GM12878 (cell line): ENCODE measurements at regions of chr9 and their contacts with region 1.

Region 1: DNA sequence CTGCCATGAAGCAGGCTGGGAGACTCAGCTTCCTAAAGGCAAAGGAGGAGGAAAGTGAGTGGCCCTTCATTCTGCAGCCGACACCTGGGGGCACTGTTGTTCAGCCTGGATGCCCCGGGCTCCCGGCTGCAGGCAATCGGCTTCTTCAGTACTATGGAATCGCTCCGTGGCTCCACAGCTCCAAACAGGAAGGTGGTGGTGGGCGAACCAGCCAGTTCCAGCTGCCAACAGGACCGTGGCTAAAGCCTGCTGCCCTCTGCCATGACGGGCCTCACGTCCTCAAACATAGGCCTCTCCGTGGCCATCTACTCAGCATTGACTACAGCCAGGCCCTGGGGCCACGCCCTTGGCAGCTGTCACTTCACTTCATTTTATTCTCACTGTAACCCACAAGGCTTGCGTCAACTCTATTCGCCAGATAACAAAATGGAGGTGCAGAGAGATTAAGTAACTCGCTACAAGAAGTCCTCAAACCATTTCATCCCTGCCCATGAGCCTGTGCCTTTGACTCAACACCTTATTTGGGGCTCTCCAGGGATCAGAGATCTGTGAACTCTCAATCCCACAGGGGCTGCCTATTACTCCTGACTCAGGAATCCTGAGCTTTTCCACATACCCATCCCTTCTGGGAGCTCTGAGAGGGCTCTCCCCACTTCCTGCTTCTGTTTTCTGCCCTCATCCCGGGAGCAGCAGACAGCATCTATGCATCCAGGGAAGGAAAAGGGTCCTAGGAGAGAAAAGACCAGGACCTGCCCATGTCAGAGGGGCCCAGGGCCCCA is 38.0 kb downstream of the PAX5 start:
- DNase-seq: no peak
- ATAC-seq: peak; percentile 55
- H3K4me3 ChIP-seq: peak overlapping the region; percentile 47
- H3K27ac ChIP-seq: peak overlapping the region; percentile 93
- H3K4me1 ChIP-seq: peaks cover 88% of the 10 kb centered on the region
- H3K27me3 ChIP-seq: no peaks in the 10 kb centered on the region
- CTCF ChIP-seq: peak; percentile 71 to 86 (median 86)
- EP300 ChIP-seq: no peak
- POLR2A ChIP-seq: peak; percentile 29; the same call in 1 of the 2 replicates
- RAD21 ChIP-seq: peak; percentile 85

Region 2: GRCh38 chr9:36749461-36749860 is 246.7 kb before region 1 on chr9:
- CTCF ChIA-PET with region 1: no interaction called
- POLR2A ChIA-PET with region 1: no interaction called
- RAD21 ChIA-PET with region 1: no interaction called
- SMC1A ChIA-PET with region 1: no interaction called
- in situ Hi-C with region 1: no loop called
- intact Hi-C with region 1: no loop called
- DNase-seq: no peak
- ATAC-seq: no peak
- H3K4me3 ChIP-seq: no peak overlapping the region
- H3K27ac ChIP-seq: no peak overlapping the region
- H3K4me1 ChIP-seq: no peaks in the 10 kb centered on the region
- H3K27me3 ChIP-seq: peaks cover 0 to 4% of the 10 kb centered on the region in 2 experiments; a peak in 3 of 4 replicates
- CTCF ChIP-seq: no peak
- EP300 ChIP-seq: no peak
- POLR2A ChIP-seq: no peak
- RAD21 ChIP-seq: no peak

Region 3: DNA sequence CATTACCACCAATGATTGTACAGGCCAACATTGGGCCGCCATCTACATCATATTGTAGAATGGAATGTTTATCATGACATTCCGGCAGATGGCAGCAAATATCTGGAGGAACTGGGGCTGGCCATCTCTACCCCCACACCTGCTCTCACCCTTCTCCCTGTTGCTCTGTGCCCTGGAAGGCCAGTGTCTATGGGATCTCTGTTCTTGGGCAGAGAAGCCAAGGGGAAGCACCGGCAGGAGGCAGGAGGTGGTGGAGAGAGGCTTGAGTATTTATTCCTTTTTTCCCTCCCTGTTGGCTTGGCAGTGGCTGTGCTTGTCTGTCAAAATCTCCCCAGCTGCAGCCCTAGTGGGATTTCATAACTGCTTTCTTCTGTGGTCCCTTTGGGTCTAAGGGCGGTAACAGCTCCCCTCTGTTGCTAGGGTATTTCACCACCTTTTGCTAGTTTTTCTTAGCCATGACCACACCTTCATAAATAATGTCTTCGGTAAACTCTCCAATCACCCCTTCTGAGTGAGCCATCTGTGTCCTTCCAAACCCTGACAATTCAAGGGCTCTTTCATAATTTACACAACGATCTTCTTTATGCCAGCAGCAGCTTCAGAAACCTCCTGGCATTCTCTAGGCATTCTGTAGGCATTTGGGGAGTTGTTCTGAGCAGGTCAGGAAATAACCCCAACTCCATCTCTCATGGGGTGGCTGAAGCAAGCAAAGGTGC is 197.6 kb before region 1 on chr9:
- CTCF ChIA-PET with region 1: interaction called, 6 read pairs
- POLR2A ChIA-PET with region 1: no interaction called
- RAD21 ChIA-PET with region 1: no interaction called
- SMC1A ChIA-PET with region 1: interaction called, 3 read pairs
- in situ Hi-C with region 1: no loop called
- intact Hi-C with region 1: loop called (anchors 1 kb)
- DNase-seq: no peak
- ATAC-seq: peak; percentile 98
- H3K4me3 ChIP-seq: no peak overlapping the region
- H3K27ac ChIP-seq: no peak overlapping the region
- H3K4me1 ChIP-seq: no peaks in the 10 kb centered on the region
- H3K27me3 ChIP-seq: no peaks in the 10 kb centered on the region; a peak in 1 of 4 replicates
- CTCF ChIP-seq: peak in 2 of 3 experiments; percentile 25 to 66; a peak in 3 of 6 replicates
- EP300 ChIP-seq: no peak
- POLR2A ChIP-seq: no peak
- RAD21 ChIP-seq: peak; percentile 71

Region 4: GRCh38 chr9:37010180-37010579 is 14.1 kb after region 1 on chr9:
- CTCF ChIA-PET with region 1: interaction called, 32 read pairs
- POLR2A ChIA-PET with region 1: interaction called, 354 read pairs
- RAD21 ChIA-PET with region 1: interaction called, 45 read pairs
- SMC1A ChIA-PET with region 1: interaction called, 11 read pairs
- in situ Hi-C with region 1: no loop called
- intact Hi-C with region 1: no loop called
- DNase-seq: no peak
- ATAC-seq: peak; percentile 38
- H3K4me3 ChIP-seq: peak overlapping the region; percentile 61
- H3K27ac ChIP-seq: peak overlapping the region; percentile 83
- H3K4me1 ChIP-seq: peaks cover 76% of the 10 kb centered on the region
- H3K27me3 ChIP-seq: no peaks in the 10 kb centered on the region
- CTCF ChIP-seq: no peak
- EP300 ChIP-seq: no peak
- POLR2A ChIP-seq: 0 out of 2 replicates have a peak, but pooled peaks have one; percentile 38
- RAD21 ChIP-seq: no peak

Region 5: DNA sequence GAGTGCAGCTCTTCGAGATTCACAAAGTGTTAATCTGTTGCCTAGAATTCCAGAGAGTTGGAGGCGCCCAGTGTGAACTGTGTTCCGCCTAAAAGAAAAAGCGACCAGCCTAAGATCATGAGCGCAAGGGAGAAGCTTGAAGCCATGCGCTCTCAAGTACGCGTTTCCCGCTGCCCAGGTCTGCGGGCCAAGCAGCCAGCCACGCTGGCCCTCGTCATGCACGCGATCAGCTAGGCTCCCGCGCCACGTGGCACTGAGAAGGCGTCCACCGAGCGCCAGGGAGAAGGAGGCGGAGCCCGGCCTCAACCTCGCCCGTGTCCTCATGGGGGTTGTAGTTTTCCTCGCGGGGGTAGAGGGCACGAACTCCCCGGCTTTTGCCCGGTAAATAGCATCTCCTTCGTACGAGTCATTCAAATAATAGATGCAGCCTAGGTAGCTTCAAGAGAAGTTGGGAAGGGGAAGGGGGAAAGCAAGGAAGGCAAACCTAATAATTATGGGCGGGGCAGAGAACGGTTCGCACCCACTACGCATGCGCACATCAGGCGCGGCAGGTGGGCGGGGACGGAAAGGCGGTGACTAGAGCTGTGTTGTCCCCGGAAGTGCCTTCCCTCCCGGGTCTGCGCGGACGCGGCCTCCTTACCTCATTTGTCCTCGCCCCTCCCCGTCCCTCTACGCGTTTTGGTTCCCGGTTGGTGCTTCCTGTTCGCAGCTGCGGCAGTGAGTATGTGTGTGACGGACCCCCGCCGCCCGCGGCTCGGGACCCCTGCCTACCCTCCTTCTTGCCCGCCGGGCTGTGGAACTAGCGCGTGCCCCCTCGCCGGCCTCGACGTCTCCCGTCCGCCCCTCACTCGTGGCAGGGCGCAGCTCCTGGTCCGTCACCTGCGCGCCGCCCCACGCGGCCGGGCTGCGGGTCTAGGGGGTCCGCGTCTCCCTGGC is 124.1 kb after region 1 on chr9 and contains the start of gene ZCCHC7:
- CTCF ChIA-PET with region 1: interaction called, 5 read pairs
- POLR2A ChIA-PET with region 1: interaction called, 4 read pairs
- RAD21 ChIA-PET with region 1: interaction called, 20 read pairs
- SMC1A ChIA-PET with region 1: interaction called, 11 read pairs
- in situ Hi-C with region 1: no loop called
- intact Hi-C with region 1: no loop called
- DNase-seq: peak; percentile 89
- ATAC-seq: peak; percentile 94
- H3K4me3 ChIP-seq: peak within 1 kb of the TSS; percentile 93
- H3K27ac ChIP-seq: peak within 1 kb of the TSS; percentile 93
- H3K4me1 ChIP-seq: peaks cover 8% of the 10 kb centered on the region
- H3K27me3 ChIP-seq: no peaks in the 10 kb centered on the region
- CTCF ChIP-seq: no peak
- EP300 ChIP-seq: no peak
- POLR2A ChIP-seq: peak; percentile 92
- RAD21 ChIP-seq: no peak
- polyA plus RNA-seq, gene ZCCHC7: 58.6 to 60.8 TPM

Region 6: GRCh38 chr9:37293664-37294524 is 297.8 kb after region 1 on chr9:
- CTCF ChIA-PET with region 1: interaction called, 15 read pairs
- POLR2A ChIA-PET with region 1: interaction called, 3 read pairs
- RAD21 ChIA-PET with region 1: interaction called, 11 read pairs
- SMC1A ChIA-PET with region 1: interaction called, 13 read pairs
- in situ Hi-C with region 1: no loop called
- intact Hi-C with region 1: loop called (anchors 2 kb)
- DNase-seq: peak; percentile 91
- ATAC-seq: peak; percentile 73
- H3K4me3 ChIP-seq: no peak overlapping the region
- H3K27ac ChIP-seq: peak overlapping the region; percentile 90
- H3K4me1 ChIP-seq: peaks cover 60% of the 10 kb centered on the region
- H3K27me3 ChIP-seq: no peaks in the 10 kb centered on the region
- CTCF ChIP-seq: no peak
- EP300 ChIP-seq: peak; percentile 95 to 96
- POLR2A ChIP-seq: no peak
- RAD21 ChIP-seq: no peak

Region 7: GRCh38 chr9:37371565-37372464 is 375.7 kb after region 1 on chr9:
- CTCF ChIA-PET with region 1: interaction called, 6 read pairs
- POLR2A ChIA-PET with region 1: no interaction called
- RAD21 ChIA-PET with region 1: no interaction called
- SMC1A ChIA-PET with region 1: interaction called, 8 read pairs
- in situ Hi-C with region 1: no loop called
- intact Hi-C with region 1: loop called (anchors 10 kb)
- DNase-seq: peak; percentile 63
- ATAC-seq: peak; percentile 44
- H3K4me3 ChIP-seq: no peak overlapping the region
- H3K27ac ChIP-seq: peak overlapping the region; percentile 97
- H3K4me1 ChIP-seq: peaks cover 78% of the 10 kb centered on the region
- H3K27me3 ChIP-seq: no peaks in the 10 kb centered on the region
- CTCF ChIP-seq: no peak
- EP300 ChIP-seq: peak in 1 of 2 experiments; percentile 33; a peak in 2 of 4 replicates
- POLR2A ChIP-seq: peak; percentile 7; the same call in 1 of the 2 replicates
- RAD21 ChIP-seq: no peak